B cell (primary cell): ENCODE measurements at regions of chr7 and their contacts with region 1.

Region 1: GRCh38 chr7:131654668-131655326 is 98.4 kb upstream of the PODXL start:
- DNase-seq: peak; percentile 79
- ATAC-seq: peak; percentile 91
- H3K4me3 ChIP-seq: no peak overlapping the region
- H3K4me3 Mint-ChIP-seq: no peak overlapping the region
- H3K27ac ChIP-seq: no peak overlapping the region
- H3K27ac Mint-ChIP-seq: no peak overlapping the region
- H3K4me1 ChIP-seq: no peaks in the 10 kb centered on the region
- H3K4me1 Mint-ChIP-seq: no peaks in the 10 kb centered on the region
- H3K27me3 ChIP-seq: peaks cover 0 to 4% (median 0%) of the 10 kb centered on the region in 4 experiments
- H3K27me3 Mint-ChIP-seq: peaks cover 6% of the 10 kb centered on the region
- CTCF ChIP-seq: peak; percentile 82

Region 2: GRCh38 chr7:131507592-131508331 is 147.0 kb before region 1 on chr7:
- CTCF ChIA-PET with region 1: interaction called, 48 read pairs
- POLR2A ChIA-PET with region 1: interaction called, 3 read pairs
- intact Hi-C with region 1: no loop called
- DNase-seq: peak; percentile 79
- ATAC-seq: peak; percentile 90
- H3K4me3 ChIP-seq: no peak overlapping the region
- H3K4me3 Mint-ChIP-seq: no peak overlapping the region
- H3K27ac ChIP-seq: no peak overlapping the region
- H3K27ac Mint-ChIP-seq: no peak overlapping the region
- H3K4me1 ChIP-seq: peaks cover 6 to 9% of the 10 kb centered on the region in 2 donors
- H3K4me1 Mint-ChIP-seq: peaks cover 13% of the 10 kb centered on the region
- H3K27me3 ChIP-seq: no peaks in the 10 kb centered on the region
- H3K27me3 Mint-ChIP-seq: peaks cover 7% of the 10 kb centered on the region
- CTCF ChIP-seq: peak; percentile 88

Region 3: GRCh38 chr7:131513245-131514061 is 141.3 kb before region 1 on chr7:
- CTCF ChIA-PET with region 1: interaction called, 48 read pairs
- POLR2A ChIA-PET with region 1: interaction called, 3 read pairs
- intact Hi-C with region 1: no loop called
- DNase-seq: peak; percentile 74
- ATAC-seq: peak; percentile 89
- H3K4me3 ChIP-seq: no peak overlapping the region
- H3K4me3 Mint-ChIP-seq: no peak overlapping the region
- H3K27ac ChIP-seq: no peak overlapping the region
- H3K27ac Mint-ChIP-seq: no peak overlapping the region
- H3K4me1 ChIP-seq: peaks cover 3 to 7% of the 10 kb centered on the region in 2 donors
- H3K4me1 Mint-ChIP-seq: peaks cover 13% of the 10 kb centered on the region
- H3K27me3 ChIP-seq: no peaks in the 10 kb centered on the region
- H3K27me3 Mint-ChIP-seq: peaks cover 3% of the 10 kb centered on the region
- CTCF ChIP-seq: peak; percentile 97

Region 4: DNA sequence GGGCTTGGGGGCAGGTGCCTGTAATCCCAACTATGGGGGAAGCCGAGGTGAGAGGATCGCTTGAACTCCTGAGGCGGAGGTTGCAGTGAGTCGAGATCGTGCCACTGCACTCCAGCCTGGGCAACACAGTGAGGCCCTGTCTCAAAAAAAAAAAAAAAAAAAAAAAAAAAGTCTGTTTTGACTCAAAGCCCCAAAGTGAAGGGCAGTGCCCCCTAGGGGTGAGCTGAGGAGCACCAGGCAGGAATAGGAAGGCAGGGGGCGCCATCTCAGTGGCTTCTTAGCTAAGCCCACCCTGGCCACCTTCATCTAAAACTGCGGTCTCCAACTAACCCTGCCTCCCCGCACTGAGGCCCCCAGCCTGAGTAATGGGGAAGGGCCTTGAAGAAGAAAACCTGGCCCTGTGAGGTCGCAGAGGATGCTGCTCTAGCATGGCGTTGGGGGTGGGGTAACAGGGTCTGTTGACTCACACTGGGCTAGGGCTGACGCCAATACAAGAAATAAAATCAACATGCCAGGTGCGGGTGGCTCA is 108.2 kb before region 1 on chr7:
- CTCF ChIA-PET with region 1: interaction called, 11 read pairs
- POLR2A ChIA-PET with region 1: no interaction called
- intact Hi-C with region 1: loop called (anchors 1 kb)
- DNase-seq: peak; percentile 55
- ATAC-seq: peak; percentile 49
- H3K4me3 ChIP-seq: no peak overlapping the region
- H3K4me3 Mint-ChIP-seq: no peak overlapping the region
- H3K27ac ChIP-seq: no peak overlapping the region
- H3K27ac Mint-ChIP-seq: no peak overlapping the region
- H3K4me1 ChIP-seq: no peaks in the 10 kb centered on the region
- H3K4me1 Mint-ChIP-seq: no peaks in the 10 kb centered on the region
- H3K27me3 ChIP-seq: no peaks in the 10 kb centered on the region
- H3K27me3 Mint-ChIP-seq: peaks cover 3% of the 10 kb centered on the region
- CTCF ChIP-seq: peak; percentile 72

Region 5: GRCh38 chr7:131556052-131556908 is 98.5 kb before region 1 on chr7 and contains the start of gene PODXL:
- CTCF ChIA-PET with region 1: interaction called, 3 read pairs
- POLR2A ChIA-PET with region 1: no interaction called
- intact Hi-C with region 1: loop called (anchors 1 kb)
- DNase-seq: peak; percentile 79
- ATAC-seq: peak; percentile 84
- H3K4me3 ChIP-seq: peak within 1 kb of the TSS; percentile 36 to 75 (median 55)
- H3K4me3 Mint-ChIP-seq: peak within 1 kb of the TSS; percentile 86
- H3K27ac ChIP-seq: no peak within 1 kb of the TSS
- H3K27ac Mint-ChIP-seq: peak within 1 kb of the TSS; percentile 2
- H3K4me1 ChIP-seq: peaks cover 29 to 32% of the 10 kb centered on the region in 2 donors
- H3K4me1 Mint-ChIP-seq: peaks cover 27% of the 10 kb centered on the region
- H3K27me3 ChIP-seq: peaks cover 0 to 50% (median 20%) of the 10 kb centered on the region in 4 experiments
- H3K27me3 Mint-ChIP-seq: peaks cover 20% of the 10 kb centered on the region
- CTCF ChIP-seq: no peak
- total RNA-seq, gene PODXL: 5.8 and 6.0 TPM in 2 replicates